K562 (cell line): ENCODE measurements at regions of chr3 and their contacts with region 1.

Region 1: DNA sequence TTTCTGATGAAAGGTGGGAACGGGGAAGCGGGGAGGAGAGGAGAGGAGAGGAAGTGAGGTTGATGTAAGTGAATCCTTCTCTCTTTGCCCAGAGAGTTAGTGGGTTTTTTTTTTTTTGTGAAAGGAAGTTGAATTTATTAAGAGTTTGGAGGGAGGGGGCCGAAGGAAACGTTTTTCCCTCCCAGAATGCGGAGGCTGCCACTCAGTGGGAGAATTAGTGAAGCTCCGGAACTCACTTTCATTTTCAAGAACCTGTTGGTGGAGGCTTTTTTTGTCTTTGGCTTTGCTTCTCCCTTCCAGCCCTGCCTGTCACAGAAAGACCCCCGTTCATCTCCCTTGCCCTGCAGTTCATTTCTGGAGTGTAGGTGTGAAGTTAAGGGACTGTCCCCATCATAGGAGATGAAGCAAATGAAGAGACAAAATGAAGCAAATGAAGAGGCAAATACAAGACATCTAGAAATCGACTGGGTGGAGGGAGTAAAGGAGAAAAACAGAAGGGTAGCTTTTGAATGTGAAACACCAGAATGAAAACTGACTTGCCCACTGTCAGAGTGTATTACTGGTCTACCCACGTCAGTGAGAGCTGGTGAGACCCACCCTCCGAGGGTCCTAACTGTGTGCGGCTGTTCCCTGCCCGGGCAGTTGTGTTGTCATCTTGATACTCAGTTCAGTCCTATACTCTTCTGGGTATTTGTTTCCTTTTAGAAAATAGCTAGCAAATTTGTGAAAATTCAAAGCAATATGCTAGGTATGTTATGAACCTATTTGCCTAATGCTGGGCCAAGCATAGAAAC is 91.5 kb downstream of the ITPR1 start:
- DNase-seq: peak in 1 of 4 experiments; percentile 39
- ATAC-seq: peak; percentile 25; the same call in 1 of the 3 replicates
- H3K4me3 ChIP-seq: no peak overlapping the region
- H3K27ac ChIP-seq: no peak overlapping the region
- H3K4me1 ChIP-seq: peaks cover 0 to 8% of the 10 kb centered on the region in 2 experiments; a peak in 3 of 5 replicates
- H3K27me3 ChIP-seq: no peaks in the 10 kb centered on the region; a peak in 1 of 5 replicates
- CTCF ChIP-seq: peak in 2 of 3 experiments; percentile 23 to 58; a peak in 2 of 6 replicates
- EP300 ChIP-seq: no peak
- POLR2A ChIP-seq: no peak
- RAD21 ChIP-seq: peak; percentile 19 to 67; a peak in 3 of 4 replicates

Region 2: GRCh38 chr3:4416961-4417360 is 167.7 kb before region 1 on chr3:
- CTCF ChIA-PET with region 1: no interaction called
- POLR2A ChIA-PET with region 1: no interaction called
- in situ Hi-C with region 1: no loop called
- intact Hi-C with region 1: loop called (anchors 5 kb)
- DNase-seq: no peak
- ATAC-seq: no peak
- H3K4me3 ChIP-seq: no peak overlapping the region
- H3K27ac ChIP-seq: no peak overlapping the region
- H3K4me1 ChIP-seq: peaks cover 0 to 9% of the 10 kb centered on the region in 2 experiments; a peak in 3 of 5 replicates
- H3K27me3 ChIP-seq: no peaks in the 10 kb centered on the region
- CTCF ChIP-seq: no peak
- EP300 ChIP-seq: no peak
- POLR2A ChIP-seq: no peak
- RAD21 ChIP-seq: no peak